Activated CD4-positive, alpha-beta memory T cell treated with anti-CD3 and anti-CD28 coated beads for 36 hours (primary cell): ENCODE measurements at regions of chr1 and their contacts with region 1.

Region 1: GRCh38 chr1:23634842-23635651 is 56.6 kb upstream of the RPL11 start:
- DNase-seq: peak; percentile 70
- H3K4me3 Mint-ChIP-seq: peak overlapping the region; percentile 35
- H3K27ac Mint-ChIP-seq: peak overlapping the region; percentile 36
- H3K4me1 Mint-ChIP-seq: peaks cover 22% of the 10 kb centered on the region
- H3K27me3 Mint-ChIP-seq: peaks cover 2% of the 10 kb centered on the region

Region 2: DNA sequence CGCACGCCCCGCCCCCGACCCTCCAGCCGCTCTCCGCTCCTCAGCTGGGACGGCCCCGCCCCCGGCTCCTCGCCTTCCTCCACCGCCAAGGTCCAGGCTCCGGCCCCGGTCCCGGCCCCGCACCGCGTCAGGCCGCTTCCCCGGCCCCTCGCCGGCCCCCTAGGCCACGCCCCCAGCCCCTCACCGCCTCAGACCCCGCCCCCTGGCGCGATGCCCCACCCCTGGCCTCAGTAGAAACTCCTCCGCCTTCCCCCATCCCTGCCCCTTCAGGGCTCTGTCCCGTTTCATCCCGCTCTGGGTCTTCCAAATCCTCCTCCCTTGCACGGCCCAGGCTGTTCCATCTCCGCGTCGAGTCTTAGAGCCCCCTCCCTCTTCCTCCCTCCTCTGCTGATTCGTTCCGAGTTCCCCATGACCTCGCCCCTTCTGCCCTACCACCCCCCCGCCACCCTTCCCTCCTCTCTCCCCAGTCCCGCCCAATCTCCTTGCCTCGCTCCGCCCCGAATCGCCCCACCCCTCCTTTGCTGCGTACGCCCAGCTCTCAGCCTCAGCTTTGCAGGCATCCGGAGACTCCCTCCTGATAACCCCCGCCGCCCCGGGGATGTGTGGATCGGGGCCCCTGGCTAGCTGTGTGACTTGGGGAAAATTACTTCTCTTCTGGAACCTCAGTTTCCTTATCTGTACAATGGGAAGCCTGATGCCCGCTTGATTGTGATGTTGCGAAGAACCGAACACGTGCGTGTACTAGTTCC is 150.6 kb before region 1 on chr1:
- CTCF ChIA-PET with region 1: interaction called, 14 read pairs
- POLR2A ChIA-PET with region 1: no interaction called
- intact Hi-C with region 1: no loop called
- DNase-seq: peak; percentile 94
- H3K4me3 Mint-ChIP-seq: peak overlapping the region; percentile 70
- H3K27ac Mint-ChIP-seq: no peak overlapping the region
- H3K4me1 Mint-ChIP-seq: peaks cover 26% of the 10 kb centered on the region
- H3K27me3 Mint-ChIP-seq: peaks cover 21% of the 10 kb centered on the region

Region 3: GRCh38 chr1:23530747-23531561 is 104.1 kb before region 1 on chr1 and contains the start of gene E2F2:
- CTCF ChIA-PET with region 1: interaction called, 27 read pairs
- POLR2A ChIA-PET with region 1: no interaction called
- intact Hi-C with region 1: no loop called
- DNase-seq: peak; percentile 89
- H3K4me3 Mint-ChIP-seq: peak within 1 kb of the TSS; percentile 88
- H3K27ac Mint-ChIP-seq: peak within 1 kb of the TSS; percentile 91
- H3K4me1 Mint-ChIP-seq: peaks cover 75% of the 10 kb centered on the region
- H3K27me3 Mint-ChIP-seq: no peaks in the 10 kb centered on the region
- total RNA-seq, gene E2F2: 22.1 to 26.3 TPM

Region 4: DNA sequence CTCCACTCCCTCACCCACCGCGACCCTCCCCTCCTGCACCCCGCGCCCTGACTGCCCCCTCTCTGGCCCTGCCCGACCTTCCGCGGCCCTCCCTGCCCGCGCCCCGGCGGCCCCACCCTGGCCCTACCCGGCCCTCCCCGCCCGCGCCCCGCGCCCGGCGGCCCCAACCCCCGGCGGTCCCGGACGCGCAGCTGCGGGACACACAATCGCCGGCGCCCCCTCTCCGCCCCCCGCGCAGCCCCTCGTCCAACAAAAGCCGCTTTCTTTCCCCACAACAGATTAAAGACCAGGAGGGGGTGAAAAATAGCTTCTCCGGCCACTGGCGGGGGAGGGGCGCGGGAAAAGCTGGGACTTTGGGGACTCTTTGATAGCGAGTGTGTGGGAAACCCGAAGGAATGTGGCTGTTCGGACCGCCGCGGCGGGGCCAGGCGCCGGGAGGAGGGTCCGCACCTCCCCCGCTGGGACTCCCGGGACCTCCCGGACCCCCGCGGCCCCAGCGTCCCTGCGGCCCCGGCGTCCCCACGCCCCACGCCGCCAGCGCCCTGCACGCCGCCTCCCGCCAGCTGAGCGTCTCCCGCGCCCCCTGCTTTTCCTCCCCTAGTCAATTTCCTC is 66.9 kb before region 1 on chr1:
- CTCF ChIA-PET with region 1: interaction called, 34 read pairs
- POLR2A ChIA-PET with region 1: no interaction called
- intact Hi-C with region 1: no loop called
- DNase-seq: no peak
- H3K4me3 Mint-ChIP-seq: peak overlapping the region; percentile 77
- H3K27ac Mint-ChIP-seq: no peak overlapping the region
- H3K4me1 Mint-ChIP-seq: peaks cover 10% of the 10 kb centered on the region
- H3K27me3 Mint-ChIP-seq: peaks cover 22% of the 10 kb centered on the region

Region 5: GRCh38 chr1:23598424-23598823 is 36.6 kb before region 1 on chr1:
- CTCF ChIA-PET with region 1: interaction called, 37 read pairs
- POLR2A ChIA-PET with region 1: no interaction called
- intact Hi-C with region 1: loop called (anchors 2 kb)
- DNase-seq: no peak
- H3K4me3 Mint-ChIP-seq: no peak overlapping the region
- H3K27ac Mint-ChIP-seq: no peak overlapping the region
- H3K4me1 Mint-ChIP-seq: peaks cover 71% of the 10 kb centered on the region
- H3K27me3 Mint-ChIP-seq: no peaks in the 10 kb centered on the region

Region 6: DNA sequence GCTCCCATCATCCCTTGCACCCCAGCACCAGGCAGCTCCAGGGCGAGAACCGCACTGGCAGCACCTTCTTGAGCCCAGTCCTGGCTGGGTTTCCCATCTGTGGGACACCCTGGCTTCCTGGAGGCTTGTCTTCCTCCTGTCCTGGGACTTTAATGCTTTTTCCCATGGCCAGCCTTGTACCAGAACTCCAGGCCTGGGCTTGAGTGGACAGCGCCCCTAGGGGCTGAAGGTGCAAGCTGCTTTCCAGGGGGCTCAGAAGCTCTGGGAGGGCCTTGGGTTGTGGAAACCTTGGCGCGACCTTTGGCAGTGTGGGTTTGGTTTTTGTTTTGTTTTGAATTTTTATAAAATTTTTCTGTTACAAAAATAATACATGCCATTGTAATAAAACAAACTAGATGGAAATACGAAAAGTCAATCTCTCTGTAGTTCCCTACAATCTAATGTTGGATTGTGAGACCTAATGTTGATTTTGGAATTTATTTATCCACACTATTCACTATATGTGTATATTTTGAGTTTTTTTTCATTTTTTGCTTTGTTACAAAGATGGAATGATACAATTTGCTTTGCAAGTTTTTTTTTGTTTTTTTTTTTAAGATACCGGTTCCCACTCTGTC is 22.7 kb after region 1 on chr1:
- CTCF ChIA-PET with region 1: interaction called, 16 read pairs
- POLR2A ChIA-PET with region 1: no interaction called
- intact Hi-C with region 1: no loop called
- DNase-seq: peak; percentile 63
- H3K4me3 Mint-ChIP-seq: no peak overlapping the region
- H3K27ac Mint-ChIP-seq: no peak overlapping the region
- H3K4me1 Mint-ChIP-seq: no peaks in the 10 kb centered on the region
- H3K27me3 Mint-ChIP-seq: no peaks in the 10 kb centered on the region